ENCODE measurements at regions of chr5 and their contacts with region 1.

Region 1: GRCh38 chr5:134851307-134851923 is 5.6 kb downstream of the C5orf24 start:
- DNase-seq: no peak
- ATAC-seq: no peak
- H3K4me3 Mint-ChIP-seq: no peak overlapping the region
- H3K27ac Mint-ChIP-seq: peak overlapping the region; percentile 18
- H3K4me1 Mint-ChIP-seq: peaks cover 25% of the 10 kb centered on the region
- H3K27me3 Mint-ChIP-seq: no peaks in the 10 kb centered on the region
- CTCF ChIP-seq: no peak

Region 2: GRCh38 chr5:134873987-134874830 is 22.8 kb after region 1 on chr5 and contains the start of gene TXNDC15:
- CTCF ChIA-PET with region 1: no interaction called
- POLR2A ChIA-PET with region 1: interaction called, 22 read pairs
- intact Hi-C with region 1: loop called (anchors 2 kb)
- DNase-seq: peak; percentile 78
- ATAC-seq: peak; percentile 93
- H3K4me3 Mint-ChIP-seq: peak within 1 kb of the TSS; percentile 95
- H3K27ac Mint-ChIP-seq: peak within 1 kb of the TSS; percentile 94
- H3K4me1 Mint-ChIP-seq: peaks cover 34% of the 10 kb centered on the region
- H3K27me3 Mint-ChIP-seq: no peaks in the 10 kb centered on the region
- CTCF ChIP-seq: no peak
- total RNA-seq, gene TXNDC15: 26.6 and 30.7 TPM in 2 replicates

Region 3: GRCh38 chr5:134964359-134965270 is 113.2 kb after region 1 on chr5:
- CTCF ChIA-PET with region 1: no interaction called
- POLR2A ChIA-PET with region 1: no interaction called
- intact Hi-C with region 1: no loop called
- DNase-seq: no peak
- ATAC-seq: no peak
- H3K4me3 Mint-ChIP-seq: no peak overlapping the region
- H3K27ac Mint-ChIP-seq: no peak overlapping the region
- H3K4me1 Mint-ChIP-seq: no peaks in the 10 kb centered on the region
- H3K27me3 Mint-ChIP-seq: no peaks in the 10 kb centered on the region
- CTCF ChIP-seq: no peak

Measured in activated B cell treated with CpG ODN at 0.5 μM for 24 hours (primary cell).